Breast epithelium (tissue), 4 donors: ENCODE measurements at regions of chr9 and their contacts with region 1.

Region 1: GRCh38 chr9:121852651-121853616 is 201.5 kb downstream of the DAB2IP start:
- DNase-seq: peak in 1 of 2 donors; percentile 38
- H3K4me3 ChIP-seq: no peak overlapping the region
- H3K27ac ChIP-seq: peak overlapping the region; percentile 70 to 90
- H3K4me1 ChIP-seq: peaks cover 0 to 4% of the 10 kb centered on the region in 2 donors
- H3K27me3 ChIP-seq: no peaks in the 10 kb centered on the region
- CTCF ChIP-seq: no peak
- POLR2A ChIP-seq: no peak

Region 2: GRCh38 chr9:121744002-121744686 is 108.8 kb before region 1 on chr9:
- intact Hi-C with region 1: no loop called
- DNase-seq: peak; percentile 79 to 85
- H3K4me3 ChIP-seq: peak overlapping the region; percentile 44 to 64 (median 52)
- H3K27ac ChIP-seq: peak overlapping the region; percentile 88 to 92
- H3K4me1 ChIP-seq: peaks cover 12 to 46% of the 10 kb centered on the region in 2 donors
- H3K27me3 ChIP-seq: no peaks in the 10 kb centered on the region
- CTCF ChIP-seq: peak; percentile 26 to 54 (median 29)
- POLR2A ChIP-seq: no peak

Region 3: GRCh38 chr9:121895818-121896544 is 43.0 kb after region 1 on chr9:
- intact Hi-C with region 1: loop called (anchors 1 kb)
- DNase-seq: no peak
- H3K4me3 ChIP-seq: peak overlapping the region in 2 of 3 donors; percentile 15 to 47
- H3K27ac ChIP-seq: peak overlapping the region in 1 of 2 donors; percentile 25
- H3K4me1 ChIP-seq: no peaks in the 10 kb centered on the region
- H3K27me3 ChIP-seq: no peaks in the 10 kb centered on the region
- CTCF ChIP-seq: no peak
- POLR2A ChIP-seq: no peak